A673 (cell line): ENCODE measurements at regions of chr16 and their contacts with region 1.

Region 1: GRCh38 chr16:73047518-73048291 is at the start of gene ZFHX3:
- DNase-seq: peak; percentile 82
- H3K4me3 ChIP-seq: peak within 1 kb of the TSS; percentile 69
- H3K27ac ChIP-seq: peak within 1 kb of the TSS; percentile 70
- H3K4me1 ChIP-seq: peaks cover 65% of the 10 kb centered on the region
- H3K27me3 ChIP-seq: no peaks in the 10 kb centered on the region
- CTCF ChIP-seq: no peak
- total RNA-seq, gene ZFHX3: 21.7 and 21.8 TPM in 2 replicates

Region 2: GRCh38 chr16:72530444-72530843 is 517.3 kb before region 1 on chr16:
- CTCF ChIA-PET with region 1: no interaction called
- POLR2A ChIA-PET with region 1: no interaction called
- intact Hi-C with region 1: loop called (anchors 10 kb)
- DNase-seq: peak; percentile 87
- H3K4me3 ChIP-seq: no peak overlapping the region
- H3K27ac ChIP-seq: no peak overlapping the region
- H3K4me1 ChIP-seq: no peaks in the 10 kb centered on the region
- H3K27me3 ChIP-seq: no peaks in the 10 kb centered on the region
- CTCF ChIP-seq: peak; percentile 58

Region 3: GRCh38 chr16:72847187-72848027 is 200.3 kb before region 1 on chr16:
- CTCF ChIA-PET with region 1: interaction called, 12 read pairs
- POLR2A ChIA-PET with region 1: no interaction called
- intact Hi-C with region 1: no loop called
- DNase-seq: peak; percentile 66
- H3K4me3 ChIP-seq: no peak overlapping the region
- H3K27ac ChIP-seq: peak overlapping the region; percentile 75
- H3K4me1 ChIP-seq: peaks cover 28% of the 10 kb centered on the region
- H3K27me3 ChIP-seq: no peaks in the 10 kb centered on the region
- CTCF ChIP-seq: peak; percentile 71